Activated naive CD4-positive, alpha-beta T cell treated with anti-CD3 and anti-CD28 coated beads for 36 hours (primary cell): ENCODE measurements at regions of chr22 and their contacts with region 1.

Region 1: DNA sequence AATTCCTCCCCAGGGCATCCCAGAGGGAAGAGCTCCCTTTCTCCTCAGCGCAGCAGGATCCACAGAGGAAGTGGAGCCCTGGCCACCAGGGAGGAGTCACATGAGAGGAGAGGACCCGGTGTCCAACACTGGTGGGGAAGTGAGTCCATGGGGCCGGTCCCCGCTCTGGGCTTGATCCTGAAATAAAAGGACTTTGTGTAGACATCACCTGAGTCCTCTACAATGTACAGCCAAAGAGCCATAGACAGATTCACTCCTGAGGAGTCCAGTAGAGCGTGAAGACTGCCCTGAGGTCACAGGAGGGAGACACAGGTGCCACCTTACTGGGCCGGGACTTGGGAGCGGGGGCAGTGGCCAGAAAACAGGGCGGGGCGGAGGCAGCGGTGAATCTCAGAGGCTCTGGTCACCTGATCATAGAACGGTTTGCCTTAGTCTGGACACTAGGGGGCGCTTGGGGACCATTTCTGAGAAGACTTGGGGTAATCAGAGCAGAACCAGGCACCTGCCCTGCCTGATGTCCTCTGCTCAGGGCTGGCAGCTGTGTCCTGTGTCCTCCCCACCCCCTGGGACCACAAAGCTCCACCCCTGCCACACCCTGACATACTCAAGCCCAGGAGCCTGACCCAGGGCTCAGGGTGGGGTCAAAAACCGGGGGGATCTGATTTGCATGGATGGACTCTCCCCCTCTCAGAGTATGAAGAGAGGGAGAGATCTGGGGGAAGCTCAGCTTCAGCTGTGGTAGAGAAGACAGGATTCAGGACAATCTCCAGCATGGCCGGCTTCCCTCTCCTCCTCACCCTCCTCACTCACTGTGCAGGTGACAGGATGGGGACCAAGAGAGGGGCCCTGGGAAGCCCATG is 112.7 kb downstream of the VPREB1 start:
- DNase-seq: peak; percentile 92
- H3K4me3 Mint-ChIP-seq: no peak overlapping the region
- H3K27ac Mint-ChIP-seq: no peak overlapping the region
- H3K4me1 Mint-ChIP-seq: no peaks in the 10 kb centered on the region
- H3K27me3 Mint-ChIP-seq: peaks cover 38% of the 10 kb centered on the region

Region 2: GRCh38 chr22:22375576-22376423 is 18.5 kb after region 1 on chr22:
- CTCF ChIA-PET with region 1: interaction called, 3 read pairs
- intact Hi-C with region 1: loop called (anchors 1 kb)
- DNase-seq: no peak
- H3K4me3 Mint-ChIP-seq: no peak overlapping the region
- H3K27ac Mint-ChIP-seq: no peak overlapping the region
- H3K4me1 Mint-ChIP-seq: no peaks in the 10 kb centered on the region
- H3K27me3 Mint-ChIP-seq: peaks cover 32% of the 10 kb centered on the region

Region 3: DNA sequence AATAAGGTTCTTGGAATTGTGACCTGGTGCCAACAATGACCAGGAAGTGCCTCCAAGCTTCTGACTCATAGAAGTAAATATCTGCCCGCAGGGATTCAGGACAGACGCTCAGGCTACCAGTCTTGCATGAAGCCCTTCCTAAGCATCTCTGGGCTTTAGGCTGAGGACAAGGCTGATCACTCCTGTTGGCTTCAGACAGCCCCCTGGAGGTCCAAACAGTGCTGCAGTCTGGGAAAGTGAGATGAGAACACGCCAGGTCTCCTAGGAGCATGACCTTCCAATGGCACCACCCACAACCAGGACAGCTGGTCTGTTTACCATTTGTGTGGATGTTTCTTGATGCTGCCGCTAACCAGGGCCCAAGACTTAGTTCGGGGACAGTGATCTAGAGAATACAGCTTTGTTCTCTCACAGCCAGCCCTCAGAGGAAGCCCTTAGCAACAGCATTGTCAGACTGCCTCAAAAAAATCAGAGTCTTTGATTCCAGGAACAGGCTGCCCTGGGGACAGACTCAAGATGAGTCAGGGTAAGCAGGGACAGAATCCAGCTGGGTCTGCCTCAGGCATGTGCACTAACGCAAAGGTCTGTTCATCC is 40.1 kb after region 1 on chr22:
- CTCF ChIA-PET with region 1: no interaction called
- intact Hi-C with region 1: no loop called
- DNase-seq: no peak
- H3K4me3 Mint-ChIP-seq: no peak overlapping the region
- H3K27ac Mint-ChIP-seq: no peak overlapping the region
- H3K4me1 Mint-ChIP-seq: no peaks in the 10 kb centered on the region
- H3K27me3 Mint-ChIP-seq: peaks cover 3% of the 10 kb centered on the region

Region 4: DNA sequence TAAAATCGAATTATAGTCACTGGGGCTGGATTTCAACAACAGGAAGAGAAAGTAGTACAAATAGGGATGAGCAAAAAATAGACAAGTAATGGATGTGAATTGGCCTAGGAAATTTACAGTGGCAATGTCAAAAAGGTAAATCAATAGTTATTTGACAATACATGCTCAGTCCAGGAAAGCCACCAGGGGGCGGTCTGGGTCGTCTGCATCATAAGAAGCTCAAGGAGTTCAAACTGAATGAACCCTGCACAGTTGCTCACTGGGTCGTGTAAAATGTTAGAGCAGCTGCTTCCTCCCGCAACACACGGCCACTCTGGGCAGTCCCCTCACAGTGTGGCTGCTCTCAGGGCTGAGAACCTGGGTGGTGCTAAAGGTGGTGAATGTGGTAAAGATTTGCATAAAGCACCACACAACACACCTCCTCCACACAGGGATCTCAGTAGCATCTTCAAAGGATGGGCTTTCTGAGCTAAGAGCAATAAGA is 65.4 kb after region 1 on chr22:
- CTCF ChIA-PET with region 1: interaction called, 5 read pairs
- intact Hi-C with region 1: loop called (anchors 2 kb)
- DNase-seq: peak; percentile 85
- H3K4me3 Mint-ChIP-seq: no peak overlapping the region
- H3K27ac Mint-ChIP-seq: no peak overlapping the region
- H3K4me1 Mint-ChIP-seq: no peaks in the 10 kb centered on the region
- H3K27me3 Mint-ChIP-seq: peaks cover 10% of the 10 kb centered on the region